Colonic mucosa (tissue), 4 donors: ENCODE measurements at regions of chr20 and their contacts with region 1.

Region 1: GRCh38 chr20:44540834-44541233 is 19.0 kb upstream of the SERINC3 start:
- DNase-seq: peak; percentile 11
- H3K4me3 ChIP-seq: no peak overlapping the region
- H3K27ac ChIP-seq: no peak overlapping the region
- H3K4me1 ChIP-seq: no peaks in the 10 kb centered on the region
- H3K27me3 ChIP-seq: no peaks in the 10 kb centered on the region
- CTCF ChIP-seq: no peak

Region 2: GRCh38 chr20:44601801-44602204 is 61.0 kb after region 1 on chr20:
- intact Hi-C with region 1: loop called (anchors 5 kb)
- DNase-seq: no peak
- H3K4me3 ChIP-seq: no peak overlapping the region
- H3K27ac ChIP-seq: peak overlapping the region; percentile 37
- H3K4me1 ChIP-seq: peaks cover 5% of the 10 kb centered on the region
- H3K27me3 ChIP-seq: no peaks in the 10 kb centered on the region
- CTCF ChIP-seq: no peak